Colonic mucosa (tissue), 4 donors: ENCODE measurements at regions of chr11 and their contacts with region 1.

Region 1: DNA sequence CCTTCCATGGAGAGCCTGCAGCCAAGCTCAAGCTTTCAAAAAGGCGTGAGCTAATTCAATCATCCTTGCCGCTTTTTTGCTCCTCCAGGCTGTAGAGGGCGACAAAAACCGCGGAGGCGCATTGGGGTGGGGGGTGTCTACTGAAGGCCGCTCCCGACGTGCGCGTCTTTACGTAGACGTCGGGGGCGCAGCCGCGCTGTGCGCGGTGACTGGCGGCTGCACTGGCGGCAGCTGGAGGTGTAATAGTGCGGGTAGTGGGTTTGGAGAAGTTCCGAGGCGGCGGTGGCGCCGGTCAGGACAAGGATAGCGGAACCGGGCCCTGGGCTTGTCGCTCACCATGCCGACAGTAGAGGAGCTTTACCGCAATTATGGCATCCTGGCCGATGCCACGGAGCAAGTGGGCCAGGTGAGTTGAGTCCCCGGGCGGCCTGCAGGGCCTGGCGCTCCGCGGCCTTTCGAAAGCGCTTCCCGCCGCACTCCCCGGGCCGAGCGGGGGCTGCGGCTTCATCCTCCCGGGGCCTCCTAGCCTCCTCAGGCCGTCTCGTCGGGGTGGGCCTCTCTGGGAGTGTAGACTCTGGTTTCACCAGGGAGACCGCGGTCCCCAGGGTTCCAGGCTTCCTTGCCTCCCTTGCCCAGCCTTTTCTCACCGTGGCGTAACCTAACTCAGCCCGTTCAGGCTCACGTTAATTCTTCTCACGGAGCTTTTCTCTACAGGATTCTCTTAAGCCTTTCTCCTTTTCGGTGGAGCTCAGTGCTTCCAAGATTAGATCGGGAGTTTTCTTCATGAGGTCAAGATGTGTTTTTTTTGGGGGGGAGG is at the start of gene API5:
- DNase-seq: peak; percentile 94
- H3K4me3 ChIP-seq: peak within 1 kb of the TSS; percentile 91
- H3K27ac ChIP-seq: peak within 1 kb of the TSS; percentile 77
- H3K4me1 ChIP-seq: peaks cover 4% of the 10 kb centered on the region
- H3K27me3 ChIP-seq: no peaks in the 10 kb centered on the region
- CTCF ChIP-seq: peak; percentile 58
- total RNA-seq, gene API5: 86.4 to 98.0 TPM

Region 2: GRCh38 chr11:43177975-43178374 is 134.0 kb before region 1 on chr11:
- intact Hi-C with region 1: no loop called
- DNase-seq: no peak
- H3K4me3 ChIP-seq: no peak overlapping the region
- H3K27ac ChIP-seq: no peak overlapping the region
- H3K4me1 ChIP-seq: no peaks in the 10 kb centered on the region
- H3K27me3 ChIP-seq: no peaks in the 10 kb centered on the region
- CTCF ChIP-seq: no peak

Region 3: GRCh38 chr11:43419460-43419859 is 107.5 kb after region 1 on chr11:
- intact Hi-C with region 1: loop called (anchors 2 kb)
- DNase-seq: peak; percentile 63
- H3K4me3 ChIP-seq: no peak overlapping the region
- H3K27ac ChIP-seq: no peak overlapping the region
- H3K4me1 ChIP-seq: no peaks in the 10 kb centered on the region
- H3K27me3 ChIP-seq: no peaks in the 10 kb centered on the region
- CTCF ChIP-seq: peak; percentile 64